Ascending aorta (tissue), 2 donors: ENCODE measurements at regions of chr3 and their contacts with region 1.

Region 1: DNA sequence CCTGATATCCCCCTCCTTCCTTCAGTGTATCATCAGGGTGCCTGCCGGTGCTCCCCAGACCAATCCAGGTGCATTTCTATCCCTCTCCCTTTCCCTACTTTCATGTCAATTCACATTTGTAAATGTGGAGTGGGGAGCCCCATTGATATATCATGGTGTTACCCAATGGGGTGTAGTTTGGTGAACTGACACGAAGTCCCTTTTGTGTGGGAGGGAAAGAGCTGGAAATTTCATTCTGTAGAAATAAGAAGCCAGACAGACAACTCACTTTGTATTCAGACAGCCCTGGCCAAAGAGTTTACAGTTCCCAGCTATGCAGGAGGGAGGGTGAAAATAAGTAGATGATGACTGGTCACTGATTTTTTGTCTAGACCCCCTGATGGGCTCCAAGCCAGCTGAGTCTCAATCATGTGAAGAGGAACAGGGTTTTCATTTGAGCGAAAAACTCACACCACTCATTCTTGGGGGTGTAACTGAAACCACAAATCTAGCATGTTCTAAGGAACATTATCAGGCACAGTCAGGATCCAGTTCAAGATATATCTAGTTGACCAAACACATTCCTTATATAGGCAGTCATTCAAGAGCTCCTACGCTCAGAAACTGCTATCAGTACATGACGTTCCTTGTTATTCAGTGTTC is 58.9 kb downstream of the LMCD1 start:
- DNase-seq: no peak
- H3K4me3 ChIP-seq: no peak overlapping the region
- H3K27ac ChIP-seq: peak overlapping the region; percentile 79 to 86
- H3K4me1 ChIP-seq: peaks cover 23 to 59% of the 10 kb centered on the region in 2 donors
- H3K27me3 ChIP-seq: no peaks in the 10 kb centered on the region
- CTCF ChIP-seq: no peak

Region 2: DNA sequence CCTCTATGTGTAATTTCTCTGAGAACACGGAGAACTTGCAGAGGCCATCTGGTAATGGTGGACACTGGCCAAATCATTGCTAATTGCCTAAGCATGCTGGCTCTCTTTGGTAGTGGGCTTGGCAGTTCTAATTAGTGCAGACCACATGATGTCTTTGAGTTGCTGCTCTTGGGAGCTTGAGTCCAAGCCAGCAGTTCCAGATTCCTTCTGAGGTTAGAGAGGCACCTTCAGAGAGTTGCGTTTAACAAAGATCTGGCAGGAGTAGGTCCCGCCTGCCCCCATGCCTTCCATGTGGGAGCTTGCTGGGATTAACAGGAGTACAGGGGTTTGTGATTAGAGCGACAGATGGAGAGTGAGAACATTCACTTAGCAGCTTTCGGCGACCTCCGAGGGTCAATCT is 507.8 kb before region 1 on chr3:
- intact Hi-C with region 1: no loop called
- DNase-seq: no peak
- H3K4me3 ChIP-seq: no peak overlapping the region
- H3K27ac ChIP-seq: no peak overlapping the region
- H3K4me1 ChIP-seq: no peaks in the 10 kb centered on the region
- H3K27me3 ChIP-seq: no peaks in the 10 kb centered on the region
- CTCF ChIP-seq: no peak

Region 3: GRCh38 chr3:8529181-8529637 is 31.3 kb before region 1 on chr3:
- intact Hi-C with region 1: no loop called
- DNase-seq: no peak
- H3K4me3 ChIP-seq: peak overlapping the region in 1 of 2 donors; percentile 7
- H3K27ac ChIP-seq: peak overlapping the region; percentile 63 to 79
- H3K4me1 ChIP-seq: peaks cover 11 to 83% of the 10 kb centered on the region in 2 donors
- H3K27me3 ChIP-seq: no peaks in the 10 kb centered on the region
- CTCF ChIP-seq: no peak

Region 4: GRCh38 chr3:8607234-8608040 is 47.0 kb after region 1 on chr3:
- intact Hi-C with region 1: loop called (anchors 5 kb)
- DNase-seq: peak; percentile 34 to 79
- H3K4me3 ChIP-seq: peak overlapping the region in 1 of 2 donors; percentile 2
- H3K27ac ChIP-seq: peak overlapping the region in 1 of 2 donors; percentile 24
- H3K4me1 ChIP-seq: peaks cover 12 to 22% of the 10 kb centered on the region in 2 donors
- H3K27me3 ChIP-seq: no peaks in the 10 kb centered on the region
- CTCF ChIP-seq: peak; percentile 70 to 80 (median 75)